ENCODE measurements at regions of chr6 and their contacts with region 1.

Region 1: GRCh38 chr6:35583893-35584688 is 71.4 kb upstream of the TULP1 start:
- DNase-seq: peak; percentile 75 to 88 (median 84)
- H3K4me3 ChIP-seq: no peak overlapping the region
- H3K27ac ChIP-seq: no peak overlapping the region
- H3K4me1 ChIP-seq: peaks cover 0 to 3% (median 0%) of the 10 kb centered on the region in 4 experiments
- H3K27me3 ChIP-seq: no peaks in the 10 kb centered on the region

Region 2: DNA sequence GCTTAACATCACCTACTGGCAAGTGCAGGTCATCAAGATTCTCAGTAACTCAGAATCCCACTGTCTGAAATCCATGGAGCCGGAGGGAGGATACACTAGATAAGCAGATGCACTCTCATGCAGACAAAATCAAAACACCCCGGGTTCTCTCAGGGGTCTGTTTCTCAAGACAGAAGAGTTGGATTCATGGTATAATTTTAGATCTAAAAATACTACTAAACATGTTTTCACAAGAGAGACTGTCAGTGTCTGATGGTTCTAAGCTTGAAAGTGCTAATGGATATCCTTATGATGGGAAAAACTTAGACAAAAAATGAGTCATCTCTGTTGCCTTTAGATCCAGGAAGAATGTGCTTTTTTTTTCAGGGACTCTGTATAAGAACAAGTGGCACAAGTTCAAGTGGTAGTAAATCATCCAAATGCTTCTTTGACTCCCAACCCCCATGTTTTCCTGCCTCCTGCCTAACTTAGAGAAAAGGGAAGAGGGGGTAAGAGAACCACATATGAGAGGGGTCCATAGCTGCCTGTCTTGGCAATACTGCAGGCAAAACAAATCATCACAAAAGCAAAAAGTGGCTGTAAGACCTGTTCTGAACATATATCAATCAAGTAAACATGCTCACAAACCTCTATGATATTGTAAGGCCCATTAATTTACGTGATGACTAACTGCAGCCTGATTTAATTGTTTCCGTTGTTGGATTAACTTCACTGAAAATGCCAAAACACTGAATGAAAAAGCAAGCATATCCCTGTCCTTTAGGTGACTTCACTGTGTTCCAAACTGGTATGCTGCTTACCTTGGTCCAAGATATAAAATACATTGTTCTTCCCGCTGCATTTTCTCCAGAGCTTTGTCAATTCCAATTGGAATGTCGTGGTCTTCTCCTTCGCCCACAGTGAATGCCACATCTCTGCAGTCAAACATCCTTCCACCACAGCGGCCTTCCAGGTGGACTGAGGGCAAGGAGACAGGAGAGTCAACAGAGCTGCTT is 12.7 kb after region 1 on chr6:
- CTCF ChIA-PET with region 1: interaction called, 11 read pairs
- POLR2A ChIA-PET with region 1: interaction called, 6 read pairs
- DNase-seq: peak in 2 of 3 donors; percentile 51 to 56
- H3K4me3 ChIP-seq: peak overlapping the region in 1 of 7 experiments; percentile 28
- H3K27ac ChIP-seq: peak overlapping the region in 1 of 2 experiments; percentile 37
- H3K4me1 ChIP-seq: peaks cover 16 to 45% (median 25%) of the 10 kb centered on the region in 4 experiments
- H3K27me3 ChIP-seq: no peaks in the 10 kb centered on the region

Region 3: GRCh38 chr6:35611240-35611639 is 27.1 kb after region 1 on chr6:
- CTCF ChIA-PET with region 1: interaction called, 20 read pairs
- POLR2A ChIA-PET with region 1: no interaction called
- DNase-seq: no peak
- H3K4me3 ChIP-seq: no peak overlapping the region
- H3K27ac ChIP-seq: no peak overlapping the region
- H3K4me1 ChIP-seq: peaks cover 0 to 7% (median 0%) of the 10 kb centered on the region in 4 experiments
- H3K27me3 ChIP-seq: no peaks in the 10 kb centered on the region

Measured in common myeloid progenitor, CD34-positive (primary cell).